ENCODE measurements at regions of chr5 and their contacts with region 1.

Region 1: DNA sequence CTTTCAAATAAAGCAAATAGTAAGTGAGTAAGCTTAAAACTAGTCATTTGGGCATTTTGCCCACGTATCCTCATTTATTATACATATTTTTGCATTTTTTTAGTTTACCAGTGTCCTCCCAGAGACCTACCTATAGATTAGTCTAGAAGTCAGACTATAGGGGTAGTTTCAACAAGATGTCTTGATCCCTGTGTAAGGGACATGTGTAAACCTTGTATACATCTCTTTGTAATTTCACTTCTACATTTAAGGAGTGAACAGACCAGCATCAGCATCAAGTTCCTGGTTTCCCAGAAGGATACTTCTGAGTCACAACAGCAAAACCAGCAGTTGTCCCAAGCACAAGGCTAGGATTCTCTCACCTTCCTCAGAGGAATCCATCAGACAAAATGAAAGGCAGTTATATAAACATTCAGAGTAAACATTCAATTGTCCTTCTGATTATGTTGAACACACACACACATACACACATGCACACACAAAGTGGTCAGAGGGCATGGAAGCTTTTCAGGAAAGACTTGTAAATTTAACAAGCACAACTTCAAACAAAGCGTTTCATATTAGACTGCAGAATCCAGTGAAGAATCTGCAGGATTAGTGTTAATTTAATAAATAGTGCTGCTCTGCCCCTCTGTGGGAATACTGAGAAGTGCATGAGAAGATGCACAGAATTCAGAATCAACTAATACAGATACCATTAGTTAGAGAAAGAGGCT is 55.4 kb downstream of the HINT1 start:
- DNase-seq: peak in 1 of 2 donors; percentile 62
- H3K4me3 ChIP-seq: no peak overlapping the region
- H3K27ac ChIP-seq: no peak overlapping the region
- H3K4me1 ChIP-seq: peaks cover 0 to 3% (median 0%) of the 10 kb centered on the region in 4 donors
- H3K27me3 ChIP-seq: no peaks in the 10 kb centered on the region
- CTCF ChIP-seq: peak in 4 of 7 experiments; percentile 39 to 64 (median 51)
- EP300 ChIP-seq: no peak
- POLR2A ChIP-seq: no peak

Region 2: DNA sequence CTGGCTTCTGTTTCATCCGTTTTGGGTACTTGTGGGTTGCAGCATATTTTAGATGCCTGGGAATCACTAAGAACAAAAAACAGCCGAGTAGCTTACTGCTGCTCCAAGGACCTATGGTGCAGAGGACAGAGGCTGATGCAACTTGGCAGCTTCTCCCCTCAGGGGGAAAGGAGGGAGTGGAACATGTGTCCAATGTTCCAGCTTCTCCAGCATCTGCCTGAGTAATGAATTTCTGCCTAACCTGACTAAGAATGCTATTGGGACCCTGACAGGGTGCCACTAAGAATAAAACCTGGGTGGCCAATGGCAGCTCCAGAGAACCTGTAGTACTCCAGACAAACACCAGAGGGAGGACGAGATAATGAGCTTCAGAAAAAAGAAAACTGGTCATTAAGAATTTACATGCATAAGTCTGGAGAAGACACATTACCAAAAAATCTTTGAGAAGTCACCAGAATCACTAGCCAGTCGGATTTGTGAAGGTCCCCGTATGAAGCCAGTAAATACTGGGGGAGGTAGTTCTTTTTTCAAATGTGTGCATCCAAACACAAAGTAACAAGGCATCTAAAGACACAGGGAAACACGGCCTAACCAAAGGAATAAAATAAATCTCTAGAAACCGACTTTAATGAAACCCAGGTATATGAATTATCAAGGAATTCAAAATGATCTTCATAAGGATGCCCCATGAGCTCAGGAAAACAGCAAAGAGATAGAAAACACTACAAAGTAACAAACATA is 238.2 kb before region 1 on chr5:
- intact Hi-C with region 1: loop called (anchors 10 kb)
- DNase-seq: peak; percentile 26 to 38
- H3K4me3 ChIP-seq: no peak overlapping the region
- H3K27ac ChIP-seq: no peak overlapping the region
- H3K4me1 ChIP-seq: no peaks in the 10 kb centered on the region
- H3K27me3 ChIP-seq: no peaks in the 10 kb centered on the region
- CTCF ChIP-seq: peak in 5 of 7 experiments; percentile 50 to 77 (median 56)
- EP300 ChIP-seq: no peak
- POLR2A ChIP-seq: no peak

Region 3: GRCh38 chr5:130964231-130965202 is 145.2 kb before region 1 on chr5:
- intact Hi-C with region 1: no loop called
- DNase-seq: no peak
- H3K4me3 ChIP-seq: no peak overlapping the region
- H3K27ac ChIP-seq: no peak overlapping the region
- H3K4me1 ChIP-seq: no peaks in the 10 kb centered on the region
- H3K27me3 ChIP-seq: no peaks in the 10 kb centered on the region
- CTCF ChIP-seq: no peak
- EP300 ChIP-seq: no peak
- POLR2A ChIP-seq: no peak